HEK293T (cell line): ENCODE measurements at regions of chr10 and their contacts with region 1.

Region 1: DNA sequence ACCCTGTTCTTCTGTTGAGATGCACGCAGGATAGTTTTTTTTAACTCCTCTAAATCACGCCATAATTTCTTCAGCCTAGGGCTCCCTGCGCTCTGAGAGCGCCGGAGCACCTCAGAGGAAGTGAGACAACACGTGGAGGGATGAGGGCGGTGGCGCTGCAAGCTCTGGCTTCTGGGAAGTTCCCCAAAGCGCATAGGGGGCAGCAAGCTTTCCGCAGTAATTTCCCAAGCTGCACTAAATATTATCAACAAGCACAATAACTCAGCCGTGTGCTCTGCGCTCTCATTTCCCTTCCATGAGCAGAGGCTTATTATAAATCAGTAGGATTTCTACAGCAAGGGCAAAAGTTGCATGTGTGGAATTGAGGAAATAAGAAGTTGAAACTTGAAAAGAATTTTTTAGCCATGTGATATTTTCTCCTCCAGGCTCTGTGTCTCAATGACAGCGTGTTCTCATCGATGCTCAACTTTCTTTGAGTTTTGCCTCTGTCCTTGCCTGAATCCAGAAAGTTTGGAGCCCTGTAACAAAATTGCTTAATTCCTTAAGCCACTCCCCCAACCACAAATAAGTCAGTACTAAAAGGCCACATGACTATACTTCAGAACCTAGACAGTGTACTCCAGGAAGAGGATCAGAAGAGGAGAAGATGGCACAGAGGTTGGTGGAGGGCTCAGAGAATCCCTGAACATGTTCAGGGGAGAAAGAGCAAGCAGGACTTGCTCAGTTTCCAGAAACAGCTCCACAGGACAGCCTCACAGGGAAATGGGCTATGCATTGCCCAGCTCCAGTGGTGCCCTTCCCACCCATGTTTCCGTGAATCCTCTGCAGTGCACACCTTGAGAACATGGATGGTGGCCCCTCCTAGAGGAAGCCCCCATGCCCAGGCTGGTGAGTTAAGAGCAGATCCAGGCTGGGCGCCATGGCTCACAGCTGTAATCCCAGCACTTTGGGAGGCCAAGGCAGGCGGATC is 221.5 kb upstream of the GHITM start:
- DNase-seq: peak; percentile 41

Region 2: DNA sequence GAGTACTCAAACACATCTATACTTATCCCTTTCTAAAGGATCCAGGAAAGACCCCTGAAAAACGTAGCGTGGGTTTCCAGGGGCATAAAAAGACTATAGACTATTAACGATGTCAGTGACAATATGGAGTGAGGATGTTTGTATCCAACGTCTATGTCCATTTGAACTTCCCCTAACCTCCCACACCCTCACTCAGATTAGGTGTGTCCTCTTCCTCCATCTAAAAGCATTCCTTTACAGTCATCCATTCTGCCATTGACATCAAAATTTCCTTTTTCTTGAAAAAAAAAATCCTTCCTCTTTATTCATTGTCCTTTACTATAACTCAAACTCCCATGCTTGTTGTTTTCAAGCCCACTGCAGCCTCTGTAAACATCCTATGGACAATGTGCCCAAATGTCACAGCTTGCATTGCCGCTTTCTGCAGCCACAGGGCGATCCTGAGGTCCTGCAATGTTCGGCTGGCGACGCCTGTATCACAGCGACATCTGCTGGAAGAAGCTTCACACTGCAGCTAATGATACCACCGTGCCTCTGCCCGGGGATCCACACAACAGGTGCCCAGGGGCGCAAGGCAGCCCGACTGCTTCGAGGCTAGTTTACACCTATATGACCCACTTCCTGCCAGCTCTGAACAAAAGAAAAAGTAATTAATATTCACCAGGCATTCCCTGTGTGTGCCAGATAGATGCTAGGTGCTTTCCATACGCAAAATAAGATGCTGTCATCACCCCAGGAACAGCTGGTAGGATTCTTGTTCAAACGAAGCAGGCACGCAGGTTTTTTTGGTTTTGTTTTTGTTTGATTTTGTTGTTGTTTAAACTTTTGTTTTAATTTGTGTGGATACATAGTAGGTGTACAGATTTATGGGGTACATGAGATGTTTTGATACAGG is 46.4 kb before region 1 on chr10:
- CTCF ChIA-PET with region 1: interaction called, 11 read pairs
- POLR2A ChIA-PET with region 1: no interaction called
- DNase-seq: peak; percentile 79

Region 3: DNA sequence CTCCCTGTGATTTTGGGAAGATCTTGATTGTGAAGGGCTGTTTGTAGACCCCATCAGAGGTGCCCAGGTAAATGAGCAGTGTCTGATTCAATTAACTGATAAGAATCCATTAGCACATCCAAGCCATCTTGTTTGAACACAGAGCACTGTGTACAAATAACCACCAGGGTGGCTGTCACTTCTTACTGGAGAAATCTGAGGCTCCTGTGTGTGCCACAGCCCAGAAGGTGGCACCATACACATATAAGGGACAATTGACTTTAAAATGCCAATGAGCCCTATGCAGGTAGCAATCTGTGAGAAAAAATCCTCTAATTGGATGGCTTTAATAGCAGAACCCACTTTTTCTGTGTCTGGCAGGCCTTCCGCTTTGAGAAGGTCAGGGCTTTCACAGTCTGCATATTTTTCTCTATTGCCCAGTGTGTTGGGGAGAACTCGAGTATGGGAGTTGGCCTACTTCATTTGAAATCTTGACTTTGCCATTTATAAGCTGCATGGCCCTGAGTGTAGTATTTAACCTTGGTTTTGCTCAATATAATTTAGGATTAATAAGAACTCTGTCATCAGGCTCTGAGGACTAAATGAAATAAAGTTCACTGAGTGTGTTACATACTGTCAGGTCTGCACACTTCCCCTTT is 927.9 kb after region 1 on chr10:
- CTCF ChIA-PET with region 1: no interaction called
- POLR2A ChIA-PET with region 1: no interaction called
- DNase-seq: no peak